ENCODE measurements at regions of chr2 and their contacts with region 1.

Region 1: DNA sequence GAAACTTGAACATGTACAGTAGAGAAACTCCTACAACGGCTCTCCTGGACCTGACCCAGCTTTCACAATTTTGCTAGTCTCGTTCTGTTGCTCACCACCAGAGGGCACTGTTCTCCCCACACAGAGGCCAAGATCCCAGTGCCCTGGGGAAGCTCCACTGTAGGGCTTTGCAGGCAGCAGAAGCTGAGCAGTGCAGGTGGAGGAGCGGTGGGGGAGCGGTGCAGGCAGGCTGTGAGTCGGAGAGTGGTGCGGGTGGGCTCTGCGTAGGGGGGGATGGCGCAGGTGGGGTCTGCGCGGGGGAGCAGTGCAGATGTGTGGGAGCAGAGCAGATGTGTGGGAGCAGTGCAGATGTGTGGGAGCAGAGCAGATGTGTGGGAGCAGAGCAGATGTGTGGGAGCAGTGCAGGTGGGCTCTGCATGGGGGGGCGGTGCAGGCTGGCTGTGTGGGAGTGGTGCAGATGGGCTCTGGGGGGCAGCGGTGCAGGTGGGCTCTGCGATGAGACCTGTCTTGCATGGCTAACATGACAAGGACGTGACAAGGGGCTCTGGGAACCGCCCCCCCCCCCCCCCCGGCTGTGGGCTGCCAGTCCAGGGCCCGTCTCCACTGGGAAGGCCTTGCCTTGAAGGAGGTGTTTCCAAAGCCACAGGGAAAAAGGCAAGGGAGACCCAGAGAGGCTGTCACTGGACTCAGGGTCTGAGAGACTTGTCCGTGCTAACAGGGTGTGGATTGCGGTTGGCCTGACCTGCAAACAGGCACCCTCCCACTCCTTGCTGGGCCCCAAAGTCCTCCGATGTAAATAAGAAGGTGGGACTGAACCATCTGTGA is 7.3 kb downstream of the CYS1 start:
- DNase-seq: peak; percentile 86
- ATAC-seq: peak; percentile 95
- H3K4me3 ChIP-seq: no peak overlapping the region
- H3K4me3 Mint-ChIP-seq: no peak overlapping the region
- H3K27ac ChIP-seq: no peak overlapping the region
- H3K27ac Mint-ChIP-seq: no peak overlapping the region
- H3K4me1 ChIP-seq: peaks cover 3 to 6% of the 10 kb centered on the region in 2 donors
- H3K4me1 Mint-ChIP-seq: peaks cover 4% of the 10 kb centered on the region
- H3K27me3 ChIP-seq: peaks cover 0 to 36% (median 22%) of the 10 kb centered on the region in 4 experiments
- H3K27me3 Mint-ChIP-seq: peaks cover 43% of the 10 kb centered on the region
- CTCF ChIP-seq: peak; percentile 81

Region 2: DNA sequence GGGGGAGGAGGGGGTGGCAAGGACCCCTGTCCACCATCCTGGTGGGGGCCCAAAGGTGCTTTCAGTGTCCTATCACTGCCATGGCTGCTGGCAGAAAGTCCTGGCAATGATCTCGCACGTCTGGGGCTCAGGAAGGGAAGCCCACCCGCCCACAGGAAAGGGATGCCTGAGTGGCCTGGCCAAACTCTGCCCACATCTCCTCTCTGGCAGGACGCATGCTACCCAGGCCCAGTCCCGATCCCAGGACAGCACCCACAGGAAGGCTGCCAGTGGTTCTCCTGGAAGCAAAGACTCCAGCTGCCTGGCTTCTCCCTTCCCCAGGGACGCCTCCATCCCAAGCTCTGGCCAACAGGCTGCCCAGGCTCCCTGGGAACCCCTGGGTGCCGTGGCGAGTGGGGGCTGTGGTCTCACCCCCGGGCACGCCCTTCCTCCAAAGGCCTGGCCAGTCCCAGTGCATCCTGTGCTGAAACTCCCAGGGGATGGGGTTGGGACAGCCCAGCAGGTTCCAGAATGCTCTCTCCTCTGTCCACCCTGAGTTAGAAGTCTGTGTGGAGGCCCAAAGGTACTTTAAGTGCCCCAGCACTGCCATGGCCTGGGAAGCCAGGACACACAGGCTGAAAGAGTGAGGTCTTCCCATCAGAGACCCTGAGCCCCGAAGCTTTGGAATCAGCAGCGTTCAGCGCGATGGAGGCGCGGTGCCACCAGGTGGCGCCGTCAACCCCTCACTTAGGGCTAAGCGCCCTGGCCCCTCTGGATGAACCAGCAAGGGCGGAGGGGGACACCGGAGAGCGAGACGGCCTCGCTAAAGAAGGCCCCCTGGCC is 259.3 kb before region 1 on chr2:
- CTCF ChIA-PET with region 1: interaction called, 16 read pairs
- POLR2A ChIA-PET with region 1: no interaction called
- intact Hi-C with region 1: no loop called
- DNase-seq: peak; percentile 77
- ATAC-seq: peak; percentile 65
- H3K4me3 ChIP-seq: no peak overlapping the region
- H3K4me3 Mint-ChIP-seq: no peak overlapping the region
- H3K27ac ChIP-seq: no peak overlapping the region
- H3K27ac Mint-ChIP-seq: no peak overlapping the region
- H3K4me1 ChIP-seq: peaks cover 6 to 10% of the 10 kb centered on the region in 2 donors
- H3K4me1 Mint-ChIP-seq: peaks cover 7% of the 10 kb centered on the region
- H3K27me3 ChIP-seq: peaks cover 0 to 10% (median 5%) of the 10 kb centered on the region in 4 experiments
- H3K27me3 Mint-ChIP-seq: peaks cover 13% of the 10 kb centered on the region
- CTCF ChIP-seq: peak; percentile 96

Region 3: GRCh38 chr2:10097352-10098148 is 24.7 kb after region 1 on chr2:
- CTCF ChIA-PET with region 1: interaction called, 143 read pairs
- POLR2A ChIA-PET with region 1: no interaction called
- intact Hi-C with region 1: loop called (anchors 1 kb)
- DNase-seq: peak; percentile 47
- ATAC-seq: peak; percentile 82
- H3K4me3 ChIP-seq: no peak overlapping the region
- H3K4me3 Mint-ChIP-seq: no peak overlapping the region
- H3K27ac ChIP-seq: no peak overlapping the region
- H3K27ac Mint-ChIP-seq: peak overlapping the region; percentile 20
- H3K4me1 ChIP-seq: no peaks in the 10 kb centered on the region
- H3K4me1 Mint-ChIP-seq: peaks cover 2% of the 10 kb centered on the region
- H3K27me3 ChIP-seq: peaks cover 0 to 29% (median 7%) of the 10 kb centered on the region in 4 experiments
- H3K27me3 Mint-ChIP-seq: peaks cover 31% of the 10 kb centered on the region
- CTCF ChIP-seq: peak; percentile 85

Region 4: DNA sequence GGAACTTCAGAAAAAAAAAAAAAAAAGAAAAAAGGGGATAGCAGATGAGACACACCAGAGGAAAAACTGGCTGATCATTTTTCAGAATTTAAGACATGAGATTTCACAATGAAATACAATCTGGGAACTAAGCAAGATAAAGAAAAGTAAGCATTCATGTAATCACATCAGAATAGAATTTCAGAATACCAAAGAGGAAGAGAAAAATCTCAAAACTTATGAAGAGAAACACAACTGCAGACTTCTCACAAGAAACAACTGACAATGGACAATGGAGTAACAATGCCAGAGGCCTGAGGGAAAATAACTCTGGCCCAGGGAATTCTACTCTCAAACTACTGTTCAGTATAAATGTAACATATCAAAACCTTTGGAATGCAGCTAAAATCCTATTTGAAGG is 36.4 kb after region 1 on chr2:
- CTCF ChIA-PET with region 1: interaction called, 24 read pairs
- POLR2A ChIA-PET with region 1: no interaction called
- intact Hi-C with region 1: no loop called
- DNase-seq: no peak
- ATAC-seq: no peak
- H3K4me3 ChIP-seq: no peak overlapping the region
- H3K4me3 Mint-ChIP-seq: no peak overlapping the region
- H3K27ac ChIP-seq: no peak overlapping the region
- H3K27ac Mint-ChIP-seq: no peak overlapping the region
- H3K4me1 ChIP-seq: no peaks in the 10 kb centered on the region
- H3K4me1 Mint-ChIP-seq: no peaks in the 10 kb centered on the region
- H3K27me3 ChIP-seq: no peaks in the 10 kb centered on the region
- H3K27me3 Mint-ChIP-seq: no peaks in the 10 kb centered on the region
- CTCF ChIP-seq: no peak

Region 5: DNA sequence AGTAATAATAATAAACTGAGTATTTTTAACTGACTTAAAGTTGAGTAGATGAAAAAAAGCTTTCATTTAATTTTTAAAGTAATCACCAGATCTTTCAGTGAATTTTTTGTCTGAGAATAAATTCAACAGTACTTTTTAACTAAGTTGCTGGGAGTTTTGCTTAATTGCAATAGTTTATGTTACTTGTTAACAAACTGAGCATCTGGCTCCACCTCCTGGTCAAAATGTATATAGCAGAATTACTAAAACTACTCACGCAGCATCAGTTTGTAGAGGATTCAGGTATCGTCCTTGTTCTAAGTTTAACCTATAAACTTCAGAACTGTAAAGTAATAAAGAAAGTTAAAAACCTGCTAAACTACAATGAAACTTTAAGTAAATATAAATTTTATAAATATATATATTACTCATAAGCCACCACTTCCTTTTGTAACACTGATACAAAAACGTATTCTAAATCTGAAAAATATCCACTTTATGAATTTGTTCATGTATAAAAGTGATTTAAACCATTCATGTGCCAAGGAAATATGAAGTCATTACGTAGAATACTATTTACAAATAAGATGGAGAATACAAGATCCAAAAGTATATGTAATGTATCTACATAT is 595.6 kb after region 1 on chr2:
- CTCF ChIA-PET with region 1: interaction called, 31 read pairs
- POLR2A ChIA-PET with region 1: no interaction called
- intact Hi-C with region 1: loop called (anchors 1 kb)
- DNase-seq: peak; percentile 77
- ATAC-seq: peak; percentile 56
- H3K4me3 ChIP-seq: no peak overlapping the region
- H3K4me3 Mint-ChIP-seq: no peak overlapping the region
- H3K27ac ChIP-seq: no peak overlapping the region
- H3K27ac Mint-ChIP-seq: no peak overlapping the region
- H3K4me1 ChIP-seq: no peaks in the 10 kb centered on the region
- H3K4me1 Mint-ChIP-seq: no peaks in the 10 kb centered on the region
- H3K27me3 ChIP-seq: no peaks in the 10 kb centered on the region
- H3K27me3 Mint-ChIP-seq: no peaks in the 10 kb centered on the region
- CTCF ChIP-seq: peak; percentile 97

Measured in B cell (primary cell).